ENCODE measurements at regions of chr1 and their contacts with region 1.

Region 1: GRCh38 chr1:85297855-85298629 is 21.6 kb upstream of the BCL10 start:
- DNase-seq: peak; percentile 92
- ATAC-seq: peak; percentile 92
- H3K4me3 Mint-ChIP-seq: peak overlapping the region; percentile 43
- H3K27ac Mint-ChIP-seq: peak overlapping the region; percentile 84
- H3K4me1 Mint-ChIP-seq: peaks cover 32% of the 10 kb centered on the region
- H3K27me3 Mint-ChIP-seq: peaks cover 5% of the 10 kb centered on the region
- CTCF ChIP-seq: no peak

Region 2: GRCh38 chr1:85276215-85276977 is 21.6 kb before region 1 on chr1 and contains the start of gene BCL10:
- CTCF ChIA-PET with region 1: interaction called, 11 read pairs
- POLR2A ChIA-PET with region 1: interaction called, 4 read pairs
- intact Hi-C with region 1: no loop called
- DNase-seq: peak; percentile 98
- ATAC-seq: peak; percentile 97
- H3K4me3 Mint-ChIP-seq: peak within 1 kb of the TSS; percentile 86
- H3K27ac Mint-ChIP-seq: peak within 1 kb of the TSS; percentile 91
- H3K4me1 Mint-ChIP-seq: peaks cover 51% of the 10 kb centered on the region
- H3K27me3 Mint-ChIP-seq: no peaks in the 10 kb centered on the region
- CTCF ChIP-seq: no peak
- total RNA-seq, gene BCL10: 30.6 to 32.3 TPM

Region 3: GRCh38 chr1:85321237-85321964 is 23.4 kb after region 1 on chr1:
- CTCF ChIA-PET with region 1: no interaction called
- POLR2A ChIA-PET with region 1: no interaction called
- intact Hi-C with region 1: loop called (anchors 2 kb)
- DNase-seq: peak; percentile 45
- ATAC-seq: peak; percentile 72
- H3K4me3 Mint-ChIP-seq: no peak overlapping the region
- H3K27ac Mint-ChIP-seq: no peak overlapping the region
- H3K4me1 Mint-ChIP-seq: peaks cover 7% of the 10 kb centered on the region
- H3K27me3 Mint-ChIP-seq: peaks cover 23% of the 10 kb centered on the region
- CTCF ChIP-seq: no peak

Region 4: GRCh38 chr1:85374160-85374559 is 76.1 kb after region 1 on chr1:
- CTCF ChIA-PET with region 1: no interaction called
- POLR2A ChIA-PET with region 1: no interaction called
- intact Hi-C with region 1: no loop called
- DNase-seq: no peak
- ATAC-seq: no peak
- H3K4me3 Mint-ChIP-seq: no peak overlapping the region
- H3K27ac Mint-ChIP-seq: no peak overlapping the region
- H3K4me1 Mint-ChIP-seq: no peaks in the 10 kb centered on the region
- H3K27me3 Mint-ChIP-seq: peaks cover 4% of the 10 kb centered on the region
- CTCF ChIP-seq: no peak

Measured in activated CD8-positive, alpha-beta T cell treated with anti-CD3 and anti-CD28 coated beads for 36 hours (primary cell).